ENCODE measurements at regions of chr20 and their contacts with region 1.

Region 1: GRCh38 chr20:52494244-52494643 is 302.7 kb upstream of the ZFP64 start:
- DNase-seq: peak; percentile 82
- H3K4me3 Mint-ChIP-seq: peak overlapping the region; percentile 46
- H3K27ac Mint-ChIP-seq: peak overlapping the region; percentile 50
- H3K4me1 Mint-ChIP-seq: peaks cover 23% of the 10 kb centered on the region
- H3K27me3 Mint-ChIP-seq: no peaks in the 10 kb centered on the region

Region 2: DNA sequence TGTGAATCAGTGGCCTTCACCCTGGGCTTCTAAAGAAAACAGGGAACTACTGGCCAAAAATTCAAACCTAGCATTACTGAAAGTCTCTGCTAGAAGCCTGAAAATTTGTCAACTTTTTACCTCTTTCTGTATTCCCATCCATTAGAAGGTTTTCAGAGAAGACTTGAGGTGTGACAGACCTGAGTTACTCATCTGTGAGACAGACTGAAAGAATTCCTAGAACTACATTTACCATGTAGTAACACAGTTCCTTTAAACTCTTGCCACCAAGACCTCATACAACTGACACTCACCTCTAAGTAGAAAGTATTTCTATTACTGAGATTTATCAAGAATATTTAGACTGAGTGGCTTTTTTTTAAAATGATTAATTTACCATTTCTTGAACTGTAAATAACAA is 1540.4 kb before region 1 on chr20:
- CTCF ChIA-PET with region 1: no interaction called
- intact Hi-C with region 1: no loop called
- DNase-seq: no peak
- H3K4me3 Mint-ChIP-seq: no peak overlapping the region
- H3K27ac Mint-ChIP-seq: no peak overlapping the region
- H3K4me1 Mint-ChIP-seq: peaks cover 34% of the 10 kb centered on the region
- H3K27me3 Mint-ChIP-seq: no peaks in the 10 kb centered on the region

Region 3: GRCh38 chr20:52179331-52180179 is 314.7 kb before region 1 on chr20:
- CTCF ChIA-PET with region 1: no interaction called
- intact Hi-C with region 1: no loop called
- DNase-seq: peak; percentile 52
- H3K4me3 Mint-ChIP-seq: no peak overlapping the region
- H3K27ac Mint-ChIP-seq: peak overlapping the region; percentile 66
- H3K4me1 Mint-ChIP-seq: peaks cover 23% of the 10 kb centered on the region
- H3K27me3 Mint-ChIP-seq: no peaks in the 10 kb centered on the region

Region 4: DNA sequence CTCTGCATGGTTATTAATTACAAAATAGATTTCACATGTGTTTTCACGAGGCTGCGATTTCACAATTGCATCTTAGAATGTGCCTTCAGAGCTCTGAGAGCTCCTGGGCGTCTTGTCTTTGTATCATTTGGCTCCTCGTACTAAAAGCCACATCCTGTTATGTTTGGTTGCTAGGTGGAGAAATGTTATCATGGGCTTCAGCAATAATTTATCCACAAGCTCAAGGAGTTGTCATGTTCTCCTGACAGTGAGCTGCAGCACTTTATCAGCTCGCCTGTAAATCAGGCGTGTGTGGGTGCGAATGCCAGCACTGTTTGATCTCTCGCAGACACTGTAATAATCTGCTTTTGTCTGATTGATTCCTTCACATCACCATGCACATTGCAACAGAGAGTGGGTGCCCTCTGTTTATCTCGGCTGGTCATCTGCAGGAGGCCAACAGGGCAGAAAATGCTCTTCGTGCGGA is 84.0 kb before region 1 on chr20:
- CTCF ChIA-PET with region 1: no interaction called
- intact Hi-C with region 1: loop called (anchors 1 kb)
- DNase-seq: peak; percentile 54
- H3K4me3 Mint-ChIP-seq: peak overlapping the region; percentile 20
- H3K27ac Mint-ChIP-seq: peak overlapping the region; percentile 17
- H3K4me1 Mint-ChIP-seq: peaks cover 66% of the 10 kb centered on the region
- H3K27me3 Mint-ChIP-seq: no peaks in the 10 kb centered on the region

Region 5: DNA sequence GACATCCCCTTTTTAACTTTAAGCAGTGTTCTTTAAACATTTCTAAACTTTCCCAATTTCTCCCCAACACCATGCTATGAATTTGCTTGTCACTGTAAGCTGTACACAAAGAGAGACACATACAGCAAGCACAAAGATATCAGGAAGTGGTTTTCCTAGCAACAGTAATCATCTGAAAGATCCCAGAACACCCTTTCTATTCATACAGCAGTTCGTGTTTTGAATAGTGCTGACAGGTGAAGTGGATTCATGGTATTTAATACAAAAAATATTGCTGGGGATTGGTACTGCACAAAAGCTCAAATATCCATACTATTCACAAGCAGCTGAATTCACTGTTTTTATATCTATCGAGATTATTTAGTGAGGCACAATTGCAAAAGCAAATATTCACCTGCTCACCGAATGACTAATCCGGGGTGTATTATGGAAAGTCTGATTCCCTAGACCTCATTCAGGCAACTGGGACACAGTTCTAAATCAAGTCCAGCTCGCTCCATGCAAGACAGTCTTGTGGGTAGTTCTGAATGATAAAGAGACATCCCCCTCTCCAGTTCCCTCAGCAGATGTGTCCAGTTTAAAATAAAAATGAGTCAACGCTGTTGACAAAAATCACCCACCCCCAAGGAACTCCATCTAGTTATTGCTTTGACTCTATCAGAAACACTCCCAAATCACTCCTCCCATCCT is 370.8 kb after region 1 on chr20:
- CTCF ChIA-PET with region 1: no interaction called
- intact Hi-C with region 1: loop called (anchors 10 kb)
- DNase-seq: no peak
- H3K4me3 Mint-ChIP-seq: no peak overlapping the region
- H3K27ac Mint-ChIP-seq: no peak overlapping the region
- H3K4me1 Mint-ChIP-seq: peaks cover 24% of the 10 kb centered on the region
- H3K27me3 Mint-ChIP-seq: no peaks in the 10 kb centered on the region

Region 6: GRCh38 chr20:53021934-53022333 is 527.7 kb after region 1 on chr20:
- CTCF ChIA-PET with region 1: no interaction called
- intact Hi-C with region 1: loop called (anchors 10 kb)
- DNase-seq: peak; percentile 64
- H3K4me3 Mint-ChIP-seq: peak overlapping the region; percentile 29
- H3K27ac Mint-ChIP-seq: peak overlapping the region; percentile 93
- H3K4me1 Mint-ChIP-seq: peaks cover 85% of the 10 kb centered on the region
- H3K27me3 Mint-ChIP-seq: no peaks in the 10 kb centered on the region

Region 7: DNA sequence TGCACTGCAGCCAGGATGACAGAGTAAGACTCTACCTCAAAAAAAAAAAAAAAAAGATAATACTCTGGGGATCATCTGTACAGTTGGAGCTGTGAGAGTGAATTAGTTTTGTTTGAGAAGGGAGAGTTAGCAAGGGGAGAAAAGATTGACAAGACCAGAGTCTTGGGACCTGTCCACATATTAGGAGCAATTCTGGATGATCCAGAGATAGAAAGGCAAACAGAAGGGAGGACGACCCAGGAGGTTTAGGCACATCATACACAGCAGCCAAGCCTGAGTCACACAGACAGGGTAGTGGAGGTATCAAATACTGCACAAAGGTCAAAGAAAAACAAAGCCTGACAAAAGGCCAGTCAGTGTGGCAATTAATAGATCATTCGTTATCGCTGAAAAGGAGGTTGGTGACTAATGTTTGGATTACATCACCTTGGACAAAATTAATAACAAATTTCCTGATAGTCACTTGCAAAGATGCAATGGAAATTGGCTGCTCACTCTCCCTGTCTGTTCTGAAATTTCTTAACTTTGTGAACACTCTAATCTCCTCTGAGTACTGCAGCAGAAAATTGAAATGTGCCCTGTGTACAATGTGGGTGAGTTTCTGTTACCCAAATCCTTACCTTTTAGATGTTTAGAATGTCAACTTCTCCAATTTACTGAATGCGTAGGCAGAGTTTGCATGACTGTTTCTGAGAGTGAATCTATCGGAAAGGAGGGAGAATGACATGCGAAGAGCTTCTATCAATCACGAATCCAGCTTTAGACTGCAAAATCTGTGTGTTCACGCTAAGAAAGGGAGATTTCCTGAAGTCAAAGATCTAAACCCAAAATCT is 583.3 kb after region 1 on chr20:
- CTCF ChIA-PET with region 1: no interaction called
- intact Hi-C with region 1: loop called (anchors 1 kb)
- DNase-seq: peak; percentile 59
- H3K4me3 Mint-ChIP-seq: no peak overlapping the region
- H3K27ac Mint-ChIP-seq: no peak overlapping the region
- H3K4me1 Mint-ChIP-seq: peaks cover 46% of the 10 kb centered on the region
- H3K27me3 Mint-ChIP-seq: no peaks in the 10 kb centered on the region

Region 8: DNA sequence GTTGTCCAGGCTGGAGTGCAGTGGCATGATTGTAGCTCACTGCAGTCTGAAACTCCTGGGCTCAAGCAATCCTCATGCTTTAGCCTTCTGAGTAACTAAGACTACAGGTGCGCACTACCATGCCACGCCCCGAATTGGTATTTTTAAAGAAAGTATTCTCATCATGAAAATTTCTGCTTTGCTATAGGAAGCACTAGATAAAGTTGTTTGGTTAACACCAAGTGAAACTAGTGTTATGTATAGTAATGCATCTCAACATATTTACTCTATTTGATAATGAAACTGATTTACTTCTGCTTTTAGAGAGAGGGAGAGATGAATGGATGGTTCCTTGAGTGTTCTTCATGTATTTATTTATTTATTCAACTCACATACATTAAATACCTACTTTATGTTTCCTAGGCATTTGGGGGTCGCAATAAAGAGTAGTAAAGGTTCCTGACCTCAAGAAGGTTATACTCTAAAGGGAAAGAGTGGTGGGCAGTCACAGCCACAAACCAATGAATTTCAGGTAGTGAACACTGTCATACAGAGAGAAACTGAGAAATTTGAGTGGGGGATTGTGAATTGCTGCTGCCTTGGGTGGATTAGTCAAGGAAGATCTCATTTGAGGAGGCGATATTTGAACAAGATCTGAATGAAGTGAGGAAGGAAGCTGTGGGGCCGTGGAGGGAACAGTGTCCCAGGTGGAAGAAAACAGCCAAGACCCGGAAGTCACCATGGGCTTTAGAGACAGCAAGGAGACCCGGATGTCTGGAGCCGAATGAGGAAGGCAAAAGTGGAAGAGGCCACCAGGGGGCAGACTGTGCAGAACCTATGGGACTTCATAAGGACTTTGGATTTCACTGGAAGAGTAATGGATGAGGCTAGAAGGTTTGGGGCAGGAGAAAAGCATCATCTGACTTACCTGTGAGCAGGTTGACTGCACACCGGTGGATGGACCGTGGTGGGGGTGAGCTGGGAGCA is 663.5 kb after region 1 on chr20:
- CTCF ChIA-PET with region 1: no interaction called
- intact Hi-C with region 1: loop called (anchors 10 kb)
- DNase-seq: peak; percentile 46
- H3K4me3 Mint-ChIP-seq: no peak overlapping the region
- H3K27ac Mint-ChIP-seq: no peak overlapping the region
- H3K4me1 Mint-ChIP-seq: peaks cover 56% of the 10 kb centered on the region
- H3K27me3 Mint-ChIP-seq: no peaks in the 10 kb centered on the region